ENCODE measurements at regions of chr11 and their contacts with region 1.

Region 1: DNA sequence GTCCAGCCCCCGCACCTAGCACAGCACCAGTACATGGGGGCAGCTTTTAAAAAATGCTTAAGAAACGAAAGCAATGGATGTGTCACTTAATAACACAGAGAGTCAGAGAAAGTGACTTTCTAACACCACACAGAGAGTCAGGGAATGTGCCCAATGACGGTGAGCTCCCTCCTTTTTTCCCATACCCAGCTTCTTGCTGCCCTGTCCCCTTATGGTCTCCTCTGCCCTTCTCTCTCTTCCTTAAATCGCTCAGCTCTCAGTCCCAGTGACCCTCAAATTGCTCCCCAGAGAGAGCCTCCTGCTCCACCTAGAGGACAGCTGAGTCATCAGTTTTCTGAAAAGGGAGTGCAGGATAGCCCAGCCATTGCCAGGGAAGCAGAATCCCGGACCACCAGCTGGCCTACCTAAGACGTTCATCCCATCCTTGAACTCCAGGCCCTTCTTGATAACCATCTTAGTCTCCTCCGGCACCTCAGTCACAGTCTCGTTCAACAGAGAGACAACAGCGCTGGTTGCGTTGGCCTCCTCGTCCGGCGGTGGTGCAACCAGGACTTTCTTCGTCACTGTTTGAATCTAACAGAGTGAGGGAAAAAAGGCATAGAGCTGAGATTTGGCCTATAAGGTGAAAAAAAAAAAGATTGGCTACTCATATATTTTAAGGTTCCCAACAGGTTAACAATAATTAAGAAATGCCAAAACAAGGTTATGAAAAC is 113.5 kb downstream of the SLC1A2 start:
- DNase-seq: no peak
- ATAC-seq: peak; percentile 90
- H3K4me3 ChIP-seq: no peak overlapping the region
- H3K27ac ChIP-seq: no peak overlapping the region
- H3K4me1 ChIP-seq: peaks cover 19% of the 10 kb centered on the region
- H3K27me3 ChIP-seq: no peaks in the 10 kb centered on the region
- CTCF ChIP-seq: peak; percentile 68 to 76 (median 71)
- EP300 ChIP-seq: 0 out of 4 replicates have a peak, but pooled peaks of 1 of the 2 experiments have one; percentile 27
- POLR2A ChIP-seq: no peak
- RAD21 ChIP-seq: peak; percentile 93

Region 2: DNA sequence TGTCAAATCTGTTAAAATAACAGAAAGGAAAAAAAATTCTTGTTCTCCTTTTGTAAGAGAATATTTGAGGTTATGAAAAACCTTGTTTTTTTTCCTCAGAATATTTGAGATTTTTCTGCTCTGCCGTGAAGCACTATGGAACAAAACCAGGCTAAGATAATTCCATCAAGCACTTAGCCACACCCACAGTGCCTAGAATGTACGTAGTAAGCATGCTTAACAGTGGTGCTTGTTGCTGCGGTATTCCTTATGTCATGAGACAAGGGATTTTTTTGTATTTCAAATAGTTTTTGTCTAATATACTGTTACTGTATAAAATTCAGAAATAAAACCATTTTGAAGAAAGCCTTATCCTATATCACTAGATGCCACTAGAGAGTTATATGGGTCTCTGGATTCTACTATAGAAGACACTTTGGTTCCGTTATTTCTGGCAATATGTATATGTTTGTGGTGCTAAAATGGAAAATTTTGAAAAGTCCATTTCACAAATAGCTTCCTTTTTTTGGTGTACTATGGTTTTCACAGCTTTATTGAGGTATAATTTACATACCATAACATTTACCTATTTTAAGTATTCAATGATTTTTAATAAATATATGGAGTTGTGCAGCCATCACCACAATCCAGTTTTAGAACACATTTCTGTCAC is 365.7 kb before region 1 on chr11:
- CTCF ChIA-PET with region 1: interaction called, 5 read pairs
- POLR2A ChIA-PET with region 1: no interaction called
- RAD21 ChIA-PET with region 1: no interaction called
- SMC1A ChIA-PET with region 1: interaction called, 12 read pairs
- in situ Hi-C with region 1: no loop called
- intact Hi-C with region 1: no loop called
- DNase-seq: no peak
- ATAC-seq: peak; percentile 61
- H3K4me3 ChIP-seq: no peak overlapping the region
- H3K27ac ChIP-seq: no peak overlapping the region
- H3K4me1 ChIP-seq: no peaks in the 10 kb centered on the region; the same call in 1 of the 2 replicates
- H3K27me3 ChIP-seq: no peaks in the 10 kb centered on the region
- CTCF ChIP-seq: peak in 2 of 3 experiments; percentile 8 to 27; a peak in 1 of 6 replicates
- EP300 ChIP-seq: no peak
- POLR2A ChIP-seq: no peak
- RAD21 ChIP-seq: peak; percentile 46

Region 3: DNA sequence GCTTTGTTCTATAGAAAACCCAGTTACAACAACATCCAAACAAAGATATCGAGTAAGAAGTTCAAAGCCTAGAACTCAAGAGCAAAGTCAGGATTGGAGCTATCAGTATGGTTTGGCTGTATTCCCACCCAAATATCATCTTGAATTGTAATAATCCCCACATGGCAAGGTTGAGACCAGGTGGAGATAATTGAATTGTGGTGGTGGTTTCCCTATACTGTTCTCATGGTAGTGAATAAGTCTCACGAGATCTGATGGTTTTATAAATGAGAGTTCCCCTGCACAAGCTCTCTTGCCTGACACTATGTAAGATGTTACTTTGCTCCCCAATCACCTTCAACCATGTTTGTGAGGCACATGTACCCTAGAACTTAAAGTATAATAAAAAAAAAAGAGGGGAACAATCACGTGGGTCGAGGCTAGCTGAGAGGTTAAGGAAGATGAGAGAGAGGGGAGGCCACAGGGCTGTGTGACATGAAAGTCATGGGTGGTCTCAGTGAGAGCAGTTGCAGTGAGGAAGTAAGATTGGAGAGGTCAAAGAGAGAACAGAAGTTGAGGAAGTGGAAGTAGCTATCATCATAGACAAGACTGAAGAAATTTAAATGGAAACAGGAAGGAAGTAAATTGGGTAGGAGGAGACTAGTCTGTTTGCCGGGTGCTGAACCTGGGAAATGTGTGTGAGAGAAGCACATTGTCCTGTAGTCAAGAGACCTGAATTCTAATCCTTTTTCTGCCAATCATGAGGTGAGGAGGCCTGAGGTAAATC is 247.0 kb before region 1 on chr11:
- CTCF ChIA-PET with region 1: no interaction called
- POLR2A ChIA-PET with region 1: no interaction called
- RAD21 ChIA-PET with region 1: no interaction called
- SMC1A ChIA-PET with region 1: no interaction called
- in situ Hi-C with region 1: no loop called
- intact Hi-C with region 1: no loop called
- DNase-seq: no peak
- ATAC-seq: peak; percentile 32
- H3K4me3 ChIP-seq: no peak overlapping the region
- H3K27ac ChIP-seq: no peak overlapping the region; the same call in 1 of the 2 replicates
- H3K4me1 ChIP-seq: peaks cover 11% of the 10 kb centered on the region
- H3K27me3 ChIP-seq: no peaks in the 10 kb centered on the region
- CTCF ChIP-seq: no peak
- EP300 ChIP-seq: no peak
- POLR2A ChIP-seq: no peak
- RAD21 ChIP-seq: no peak

Region 4: GRCh38 chr11:35138943-35139721 is 166.7 kb before region 1 on chr11 and contains the start of gene CD44:
- CTCF ChIA-PET with region 1: interaction called, 10 read pairs
- POLR2A ChIA-PET with region 1: no interaction called
- RAD21 ChIA-PET with region 1: interaction called, 5 read pairs
- SMC1A ChIA-PET with region 1: interaction called, 7 read pairs
- in situ Hi-C with region 1: no loop called
- intact Hi-C with region 1: no loop called
- DNase-seq: no peak
- ATAC-seq: peak; percentile 54
- H3K4me3 ChIP-seq: peak within 1 kb of the TSS; percentile 88
- H3K27ac ChIP-seq: peak within 1 kb of the TSS; percentile 68
- H3K4me1 ChIP-seq: peaks cover 34% of the 10 kb centered on the region
- H3K27me3 ChIP-seq: no peaks in the 10 kb centered on the region
- CTCF ChIP-seq: no peak
- EP300 ChIP-seq: no peak
- POLR2A ChIP-seq: peak; percentile 99
- RAD21 ChIP-seq: no peak
- polyA plus RNA-seq, gene CD44: 57.1 to 65.3 TPM

Region 5: GRCh38 chr11:35237860-35238715 is 67.7 kb before region 1 on chr11:
- CTCF ChIA-PET with region 1: interaction called, 98 read pairs
- POLR2A ChIA-PET with region 1: no interaction called
- RAD21 ChIA-PET with region 1: interaction called, 66 read pairs
- SMC1A ChIA-PET with region 1: interaction called, 16 read pairs
- in situ Hi-C with region 1: no loop called
- intact Hi-C with region 1: loop called (anchors 2 kb)
- DNase-seq: peak; percentile 35
- ATAC-seq: peak; percentile 70
- H3K4me3 ChIP-seq: no peak overlapping the region
- H3K27ac ChIP-seq: no peak overlapping the region
- H3K4me1 ChIP-seq: peaks cover 19% of the 10 kb centered on the region
- H3K27me3 ChIP-seq: no peaks in the 10 kb centered on the region
- CTCF ChIP-seq: peak; percentile 73 to 82 (median 82)
- EP300 ChIP-seq: no peak
- POLR2A ChIP-seq: no peak
- RAD21 ChIP-seq: peak; percentile 84

Region 6: GRCh38 chr11:35257281-35257680 is 48.5 kb before region 1 on chr11:
- CTCF ChIA-PET with region 1: interaction called, 10 read pairs
- POLR2A ChIA-PET with region 1: no interaction called
- RAD21 ChIA-PET with region 1: interaction called, 4 read pairs
- SMC1A ChIA-PET with region 1: interaction called, 17 read pairs
- in situ Hi-C with region 1: no loop called
- intact Hi-C with region 1: no loop called
- DNase-seq: peak; percentile 55
- ATAC-seq: peak; percentile 100
- H3K4me3 ChIP-seq: 0 out of 2 replicates have a peak overlapping the region, but pooled peaks have one; percentile 39
- H3K27ac ChIP-seq: no peak overlapping the region
- H3K4me1 ChIP-seq: peaks cover 11% of the 10 kb centered on the region
- H3K27me3 ChIP-seq: no peaks in the 10 kb centered on the region
- CTCF ChIP-seq: no peak
- EP300 ChIP-seq: no peak
- POLR2A ChIP-seq: no peak
- RAD21 ChIP-seq: no peak

Region 7: GRCh38 chr11:35292279-35292678 is 13.5 kb before region 1 on chr11:
- CTCF ChIA-PET with region 1: interaction called, 46 read pairs
- POLR2A ChIA-PET with region 1: no interaction called
- RAD21 ChIA-PET with region 1: interaction called, 16 read pairs
- SMC1A ChIA-PET with region 1: interaction called, 50 read pairs
- in situ Hi-C with region 1: no loop called
- intact Hi-C with region 1: no loop called
- DNase-seq: no peak
- ATAC-seq: peak; percentile 53
- H3K4me3 ChIP-seq: no peak overlapping the region
- H3K27ac ChIP-seq: no peak overlapping the region; the same call in 1 of the 2 replicates
- H3K4me1 ChIP-seq: peaks cover 9% of the 10 kb centered on the region
- H3K27me3 ChIP-seq: no peaks in the 10 kb centered on the region
- CTCF ChIP-seq: no peak
- EP300 ChIP-seq: no peak
- POLR2A ChIP-seq: no peak
- RAD21 ChIP-seq: no peak

Region 8: GRCh38 chr11:35464308-35464707 is 158.5 kb after region 1 on chr11:
- CTCF ChIA-PET with region 1: no interaction called
- POLR2A ChIA-PET with region 1: no interaction called
- RAD21 ChIA-PET with region 1: no interaction called
- SMC1A ChIA-PET with region 1: no interaction called
- in situ Hi-C with region 1: no loop called
- intact Hi-C with region 1: no loop called
- DNase-seq: no peak
- ATAC-seq: no peak
- H3K4me3 ChIP-seq: no peak overlapping the region
- H3K27ac ChIP-seq: no peak overlapping the region
- H3K4me1 ChIP-seq: no peaks in the 10 kb centered on the region
- H3K27me3 ChIP-seq: peaks cover 1 to 5% of the 10 kb centered on the region in 2 experiments; a peak in 3 of 4 replicates
- CTCF ChIP-seq: no peak
- EP300 ChIP-seq: no peak
- POLR2A ChIP-seq: no peak
- RAD21 ChIP-seq: no peak